Naive thymus-derived CD4-positive, alpha-beta T cell (primary cell): ENCODE measurements at regions of chr1 and their contacts with region 1.

Region 1: GRCh38 chr1:101025657-101026504 is at the start of gene DPH5:
- DNase-seq: peak; percentile 72 to 91 (median 87)
- ATAC-seq: peak; percentile 99
- H3K4me3 ChIP-seq: peak within 1 kb of the TSS; percentile 85
- H3K4me3 Mint-ChIP-seq: peak within 1 kb of the TSS; percentile 89 to 97 (median 94)
- H3K27ac ChIP-seq: peak within 1 kb of the TSS; percentile 88
- H3K27ac Mint-ChIP-seq: peak within 1 kb of the TSS; percentile 92 to 100 (median 98)
- H3K4me1 ChIP-seq: peaks cover 14 to 44% of the 10 kb centered on the region in 2 donors
- H3K4me1 Mint-ChIP-seq: peaks cover 42 to 95% (median 78%) of the 10 kb centered on the region in 7 donors
- H3K27me3 ChIP-seq: no peaks in the 10 kb centered on the region
- H3K27me3 Mint-ChIP-seq: no peaks in the 10 kb centered on the region
- total RNA-seq, gene DPH5: 26.3 to 72.2 (median 45.3) TPM

Region 2: GRCh38 chr1:100875228-100875627 is 150.7 kb before region 1 on chr1:
- CTCF ChIA-PET with region 1: no interaction called
- POLR2A ChIA-PET with region 1: no interaction called
- intact Hi-C with region 1: no loop called
- DNase-seq: no peak
- ATAC-seq: no peak
- H3K4me3 ChIP-seq: no peak overlapping the region
- H3K4me3 Mint-ChIP-seq: no peak overlapping the region
- H3K27ac ChIP-seq: no peak overlapping the region
- H3K27ac Mint-ChIP-seq: no peak overlapping the region
- H3K4me1 ChIP-seq: no peaks in the 10 kb centered on the region
- H3K4me1 Mint-ChIP-seq: no peaks in the 10 kb centered on the region
- H3K27me3 ChIP-seq: no peaks in the 10 kb centered on the region
- H3K27me3 Mint-ChIP-seq: peaks cover 0 to 2% (median 0%) of the 10 kb centered on the region in 5 donors

Region 3: DNA sequence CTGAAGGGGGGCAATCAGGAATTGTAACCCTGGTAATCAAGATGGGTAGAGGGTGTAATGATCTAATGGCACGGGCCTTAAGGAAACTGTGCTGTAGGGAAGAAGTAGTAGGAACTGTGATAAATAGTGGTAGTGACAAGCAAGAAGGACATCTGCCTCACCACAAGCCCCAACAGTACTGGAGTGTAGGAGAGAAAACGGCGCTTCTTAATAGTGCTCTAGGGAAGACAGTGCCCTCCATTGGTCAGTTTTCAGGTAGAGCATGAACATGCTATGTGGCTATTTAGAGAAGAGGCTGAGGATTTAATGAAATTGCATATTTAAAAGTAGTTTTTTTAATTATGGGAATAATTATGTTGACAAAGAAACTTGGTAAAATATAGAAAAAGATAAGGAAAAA is 97.8 kb before region 1 on chr1:
- CTCF ChIA-PET with region 1: interaction called, 4 read pairs
- POLR2A ChIA-PET with region 1: interaction called, 9 read pairs
- intact Hi-C with region 1: loop called (anchors 1 kb)
- DNase-seq: peak in 1 of 9 donors; percentile 9
- ATAC-seq: peak; percentile 30
- H3K4me3 ChIP-seq: peak overlapping the region; percentile 15
- H3K4me3 Mint-ChIP-seq: no peak overlapping the region
- H3K27ac ChIP-seq: peak overlapping the region; percentile 74
- H3K27ac Mint-ChIP-seq: no peak overlapping the region
- H3K4me1 ChIP-seq: peaks cover 76 to 84% of the 10 kb centered on the region in 2 donors
- H3K4me1 Mint-ChIP-seq: peaks cover 26 to 61% (median 39%) of the 10 kb centered on the region in 7 donors
- H3K27me3 ChIP-seq: no peaks in the 10 kb centered on the region
- H3K27me3 Mint-ChIP-seq: no peaks in the 10 kb centered on the region

Region 4: DNA sequence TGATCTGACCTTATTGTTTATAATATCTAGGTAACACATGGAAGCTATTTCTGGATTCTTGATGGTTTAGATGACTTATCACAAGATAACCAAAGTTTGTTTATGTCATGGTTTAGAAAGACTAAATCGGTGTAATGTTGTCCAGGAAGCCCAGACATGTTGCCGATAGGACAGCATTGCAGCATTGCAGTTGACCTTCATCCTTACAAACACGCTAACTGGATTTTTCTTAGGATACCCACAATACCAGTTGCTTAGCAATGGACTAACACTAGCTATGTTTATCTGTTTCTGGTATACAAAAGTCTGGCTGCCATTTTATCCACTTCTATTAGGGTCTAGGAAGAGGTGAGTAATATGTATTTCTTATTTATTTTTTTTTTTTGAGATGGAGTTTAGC is 11.4 kb after region 1 on chr1:
- CTCF ChIA-PET with region 1: no interaction called
- POLR2A ChIA-PET with region 1: interaction called, 15 read pairs
- intact Hi-C with region 1: loop called in 1 of 2 experiments (anchors 1 kb)
- DNase-seq: no peak
- ATAC-seq: no peak
- H3K4me3 ChIP-seq: no peak overlapping the region
- H3K4me3 Mint-ChIP-seq: no peak overlapping the region
- H3K27ac ChIP-seq: no peak overlapping the region
- H3K27ac Mint-ChIP-seq: no peak overlapping the region
- H3K4me1 ChIP-seq: no peaks in the 10 kb centered on the region
- H3K4me1 Mint-ChIP-seq: peaks cover 14 to 54% (median 43%) of the 10 kb centered on the region in 7 donors
- H3K27me3 ChIP-seq: no peaks in the 10 kb centered on the region
- H3K27me3 Mint-ChIP-seq: no peaks in the 10 kb centered on the region

Region 5: DNA sequence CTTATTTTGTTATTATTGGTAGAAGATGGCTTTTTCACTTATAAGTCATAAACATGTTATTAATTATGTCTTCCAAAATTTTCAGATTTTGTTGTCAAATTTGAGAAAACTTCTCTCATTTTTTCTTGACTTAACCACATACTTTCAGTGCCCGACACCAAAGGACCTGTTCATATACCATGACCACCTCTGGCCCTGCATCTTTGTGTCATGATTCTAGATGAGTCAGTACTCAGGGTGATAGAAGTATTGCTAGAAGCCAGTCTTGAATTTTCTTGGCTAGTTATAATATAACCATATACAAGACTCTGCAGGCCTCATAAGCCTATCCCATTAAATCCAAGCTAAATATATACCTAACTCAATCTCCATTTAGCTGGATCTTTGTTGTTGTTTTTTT is 35.1 kb after region 1 on chr1:
- CTCF ChIA-PET with region 1: no interaction called
- POLR2A ChIA-PET with region 1: interaction called, 3 read pairs
- intact Hi-C with region 1: loop called in 1 of 2 experiments (anchors 5 kb)
- DNase-seq: no peak
- ATAC-seq: no peak
- H3K4me3 ChIP-seq: no peak overlapping the region
- H3K4me3 Mint-ChIP-seq: no peak overlapping the region
- H3K27ac ChIP-seq: no peak overlapping the region
- H3K27ac Mint-ChIP-seq: peak overlapping the region in 1 of 9 donors; percentile 68
- H3K4me1 ChIP-seq: peaks cover 0 to 12% of the 10 kb centered on the region in 2 donors
- H3K4me1 Mint-ChIP-seq: peaks cover 12 to 50% (median 39%) of the 10 kb centered on the region in 7 donors
- H3K27me3 ChIP-seq: no peaks in the 10 kb centered on the region
- H3K27me3 Mint-ChIP-seq: no peaks in the 10 kb centered on the region

Region 6: DNA sequence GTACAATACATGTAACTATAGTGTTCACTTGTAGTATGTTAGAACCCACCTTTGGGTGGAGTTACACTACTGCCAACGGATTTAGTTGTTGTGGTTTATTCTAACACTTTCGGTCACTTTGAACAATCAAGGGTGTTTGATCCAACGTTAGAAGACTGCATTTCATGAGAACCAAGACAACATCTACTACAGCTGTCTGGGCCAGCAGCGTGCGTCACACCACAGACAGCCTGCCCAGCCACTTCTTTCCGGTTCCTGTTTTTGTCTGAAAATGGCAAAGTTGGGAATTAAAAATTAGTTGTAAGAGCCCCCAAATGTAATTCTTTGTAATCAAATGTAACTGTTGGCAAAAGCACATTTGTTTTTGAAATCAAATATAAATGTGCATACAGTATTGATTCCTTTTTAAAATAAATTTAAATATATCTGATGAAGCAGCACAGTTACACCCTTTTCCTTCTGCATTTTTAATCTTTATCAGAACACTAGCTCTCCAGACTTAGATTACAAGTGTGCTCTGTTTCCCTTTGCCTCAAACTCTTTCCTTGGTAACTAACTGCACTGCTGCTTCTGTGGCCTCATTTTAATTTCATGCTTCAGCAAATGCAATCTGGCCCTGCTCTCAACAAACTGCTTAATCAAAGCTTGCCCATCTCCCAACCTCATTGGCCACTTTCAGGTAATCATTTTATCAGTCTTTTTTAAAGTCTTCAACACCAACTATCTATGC is 86.3 kb after region 1 on chr1:
- CTCF ChIA-PET with region 1: no interaction called
- POLR2A ChIA-PET with region 1: interaction called, 4 read pairs
- intact Hi-C with region 1: loop called in 1 of 2 experiments (anchors 1 kb)
- DNase-seq: peak; percentile 29 to 95 (median 91)
- ATAC-seq: peak; percentile 97
- H3K4me3 ChIP-seq: peak overlapping the region; percentile 33
- H3K4me3 Mint-ChIP-seq: peak overlapping the region; percentile 32 to 85 (median 78)
- H3K27ac ChIP-seq: peak overlapping the region; percentile 84
- H3K27ac Mint-ChIP-seq: peak overlapping the region; percentile 95 to 100 (median 99)
- H3K4me1 ChIP-seq: peaks cover 23 to 43% of the 10 kb centered on the region in 2 donors
- H3K4me1 Mint-ChIP-seq: peaks cover 32 to 79% (median 71%) of the 10 kb centered on the region in 7 donors
- H3K27me3 ChIP-seq: no peaks in the 10 kb centered on the region
- H3K27me3 Mint-ChIP-seq: no peaks in the 10 kb centered on the region

Region 7: DNA sequence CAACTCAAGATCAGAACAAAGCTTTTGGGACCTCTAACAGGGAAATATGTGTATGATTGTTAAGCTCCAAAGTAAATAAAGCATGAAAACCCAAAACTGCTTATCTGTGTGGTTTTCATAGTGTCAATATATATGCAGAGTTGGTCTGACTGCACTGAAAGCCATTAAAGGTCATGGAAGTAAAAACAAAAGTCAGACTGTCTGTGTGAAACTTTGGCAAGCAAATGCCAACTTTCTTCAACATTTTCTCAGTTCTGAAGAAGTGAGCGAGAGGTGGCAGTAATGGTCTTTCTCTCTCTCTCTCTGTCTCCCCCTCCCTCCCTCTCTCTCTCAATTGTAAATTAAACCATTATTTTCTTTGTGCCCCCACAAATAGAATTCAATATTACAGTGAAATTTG is 110.9 kb after region 1 on chr1:
- CTCF ChIA-PET with region 1: interaction called, 3 read pairs
- POLR2A ChIA-PET with region 1: interaction called, 5 read pairs
- intact Hi-C with region 1: loop called in 1 of 2 experiments (anchors 1 kb)
- DNase-seq: peak in 7 of 9 donors; percentile 11 to 59 (median 45)
- ATAC-seq: peak; percentile 77
- H3K4me3 ChIP-seq: no peak overlapping the region
- H3K4me3 Mint-ChIP-seq: peak overlapping the region in 9 of 10 donors; percentile 23 to 62 (median 49)
- H3K27ac ChIP-seq: peak overlapping the region; percentile 19
- H3K27ac Mint-ChIP-seq: peak overlapping the region; percentile 67 to 93 (median 85)
- H3K4me1 ChIP-seq: peaks cover 17 to 32% of the 10 kb centered on the region in 2 donors
- H3K4me1 Mint-ChIP-seq: peaks cover 37 to 67% (median 66%) of the 10 kb centered on the region in 7 donors
- H3K27me3 ChIP-seq: no peaks in the 10 kb centered on the region
- H3K27me3 Mint-ChIP-seq: no peaks in the 10 kb centered on the region

Region 8: GRCh38 chr1:101344745-101345144 is 318.9 kb after region 1 on chr1:
- CTCF ChIA-PET with region 1: no interaction called
- POLR2A ChIA-PET with region 1: no interaction called
- intact Hi-C with region 1: no loop called
- DNase-seq: no peak
- ATAC-seq: no peak
- H3K4me3 ChIP-seq: no peak overlapping the region
- H3K4me3 Mint-ChIP-seq: no peak overlapping the region
- H3K27ac ChIP-seq: no peak overlapping the region
- H3K27ac Mint-ChIP-seq: peak overlapping the region in 1 of 9 donors; percentile 47
- H3K4me1 ChIP-seq: peaks cover 6 to 8% of the 10 kb centered on the region in 2 donors
- H3K4me1 Mint-ChIP-seq: peaks cover 22 to 56% (median 31%) of the 10 kb centered on the region in 7 donors
- H3K27me3 ChIP-seq: no peaks in the 10 kb centered on the region
- H3K27me3 Mint-ChIP-seq: peaks cover 0 to 14% (median 0%) of the 10 kb centered on the region in 5 donors

Region 9: GRCh38 chr1:101357444-101357986 is 331.6 kb after region 1 on chr1:
- CTCF ChIA-PET with region 1: no interaction called
- POLR2A ChIA-PET with region 1: no interaction called
- intact Hi-C with region 1: loop called in 1 of 2 experiments (anchors 5 kb)
- DNase-seq: peak; percentile 26 to 90 (median 85)
- ATAC-seq: peak; percentile 100
- H3K4me3 ChIP-seq: no peak overlapping the region
- H3K4me3 Mint-ChIP-seq: peak overlapping the region in 3 of 10 donors; percentile 1 to 84 (median 60)
- H3K27ac ChIP-seq: no peak overlapping the region
- H3K27ac Mint-ChIP-seq: peak overlapping the region in 8 of 9 donors; percentile 42 to 97 (median 80)
- H3K4me1 ChIP-seq: peaks cover 6 to 7% of the 10 kb centered on the region in 2 donors
- H3K4me1 Mint-ChIP-seq: peaks cover 5 to 12% (median 9%) of the 10 kb centered on the region in 7 donors
- H3K27me3 ChIP-seq: no peaks in the 10 kb centered on the region
- H3K27me3 Mint-ChIP-seq: peaks cover 0 to 19% (median 0%) of the 10 kb centered on the region in 5 donors